ENCODE measurements at regions of chr16 and their contacts with region 1.

Region 1: GRCh38 chr16:30091474-30092372 is at the start of gene TBX6:
- DNase-seq: peak; percentile 16
- H3K4me3 ChIP-seq: peak within 1 kb of the TSS; percentile 56
- CTCF ChIP-seq: peak; percentile 84

Region 2: DNA sequence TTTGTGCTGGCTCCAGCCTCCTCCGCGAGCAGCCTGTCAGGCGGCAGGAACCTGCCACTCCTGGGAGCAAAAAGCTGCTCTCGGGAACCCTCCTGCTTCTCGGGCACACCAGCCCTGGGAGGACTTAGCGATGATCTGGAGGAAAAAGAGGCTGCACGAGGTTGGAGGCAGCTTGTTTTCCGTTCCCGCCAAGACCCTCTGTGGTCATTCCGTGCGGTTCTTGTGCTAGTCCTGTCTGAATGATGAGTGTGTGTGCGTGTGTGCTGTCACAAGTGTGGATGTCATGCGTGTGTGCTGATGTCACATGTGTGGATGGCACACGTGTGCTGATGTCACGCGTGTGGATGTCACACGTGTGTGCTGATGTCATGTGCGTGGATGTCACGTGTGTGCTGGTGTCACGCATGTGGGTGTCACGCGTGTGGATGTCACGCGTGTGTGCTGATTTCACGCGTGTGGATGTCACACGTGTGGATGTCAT is 835.2 kb before region 1 on chr16:
- CTCF ChIA-PET with region 1: no interaction called
- POLR2A ChIA-PET with region 1: no interaction called
- DNase-seq: no peak
- H3K4me3 ChIP-seq: no peak overlapping the region
- CTCF ChIP-seq: no peak

Region 3: DNA sequence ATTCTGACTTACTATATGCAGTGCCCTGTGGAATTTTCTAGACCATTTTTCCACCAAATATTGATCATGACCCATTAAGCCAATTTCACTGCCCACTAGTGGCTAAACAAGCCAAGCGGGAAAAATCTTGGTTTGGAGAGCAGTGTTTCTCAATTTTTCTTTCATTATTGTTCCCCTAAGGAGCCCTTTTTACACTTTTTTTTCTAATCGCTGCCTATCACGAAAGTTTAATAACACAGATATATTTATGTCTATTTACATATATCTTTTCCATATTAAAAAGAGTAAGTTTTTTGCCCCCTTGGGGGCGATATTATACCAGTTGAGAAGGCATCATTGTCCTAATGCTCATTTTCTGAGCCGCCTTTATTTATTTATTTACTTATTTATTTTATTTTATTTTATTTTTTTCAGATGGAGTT is 49.9 kb before region 1 on chr16:
- CTCF ChIA-PET with region 1: interaction called, 38 read pairs
- POLR2A ChIA-PET with region 1: no interaction called
- DNase-seq: no peak
- H3K4me3 ChIP-seq: no peak overlapping the region
- CTCF ChIP-seq: no peak

Region 4: GRCh38 chr16:30065143-30065850 is 26.4 kb before region 1 on chr16 and contains the start of gene ALDOA:
- CTCF ChIA-PET with region 1: interaction called, 12 read pairs
- POLR2A ChIA-PET with region 1: interaction called, 24 read pairs
- DNase-seq: peak; percentile 91
- H3K4me3 ChIP-seq: peak within 1 kb of the TSS; percentile 99
- CTCF ChIP-seq: no peak

Region 5: GRCh38 chr16:30075507-30076275 is 16.0 kb before region 1 on chr16 and contains the start of gene PPP4C:
- CTCF ChIA-PET with region 1: interaction called, 100 read pairs
- POLR2A ChIA-PET with region 1: interaction called, 10 read pairs
- DNase-seq: no peak
- H3K4me3 ChIP-seq: peak within 1 kb of the TSS; percentile 96
- CTCF ChIP-seq: peak; percentile 25

Region 6: GRCh38 chr16:30104494-30104968 is 12.8 kb after region 1 on chr16:
- CTCF ChIA-PET with region 1: interaction called, 33 read pairs
- POLR2A ChIA-PET with region 1: interaction called, 3 read pairs
- DNase-seq: no peak
- H3K4me3 ChIP-seq: no peak overlapping the region
- CTCF ChIP-seq: no peak

Region 7: DNA sequence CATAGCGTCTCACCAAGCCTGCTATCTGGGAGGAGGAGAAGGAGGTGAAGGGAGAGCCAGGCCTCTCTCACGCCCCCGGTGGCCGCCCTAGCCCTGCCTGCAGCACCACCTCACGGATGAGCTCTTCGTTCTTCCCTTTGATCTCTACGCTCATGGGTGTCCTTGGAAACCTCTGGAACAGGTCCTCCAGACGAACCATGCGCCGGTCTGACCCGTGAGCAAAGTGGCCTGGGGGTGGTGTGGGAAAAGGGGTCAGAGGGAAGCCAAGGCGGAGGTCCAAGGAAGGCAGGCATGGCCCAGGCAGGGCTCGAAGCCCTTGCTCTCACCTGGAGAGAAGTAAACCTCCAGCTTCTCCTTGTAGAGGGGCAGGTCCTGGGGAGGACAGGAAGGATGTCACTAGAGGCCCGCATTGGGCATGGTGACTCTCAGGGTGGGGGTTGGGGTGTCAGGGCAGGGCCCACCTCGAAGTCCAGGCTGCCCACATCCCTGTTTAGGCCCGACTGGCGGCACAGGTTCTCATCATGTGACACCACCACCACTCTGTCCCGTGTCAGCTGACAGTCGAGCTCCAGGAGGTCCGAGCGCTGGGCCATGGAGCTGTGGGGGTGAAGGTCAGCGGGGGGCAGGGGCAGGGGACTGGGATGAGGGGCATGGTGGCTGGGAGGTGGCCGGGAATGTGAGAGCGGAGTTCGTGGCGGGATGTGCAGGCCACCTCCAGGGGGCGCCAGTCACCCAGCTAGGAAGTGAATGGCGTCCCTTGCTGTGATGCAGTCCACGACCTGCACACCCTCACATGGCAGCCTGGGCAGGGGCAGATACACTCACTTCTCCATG is 20.7 kb after region 1 on chr16:
- CTCF ChIA-PET with region 1: interaction called, 18 read pairs
- POLR2A ChIA-PET with region 1: interaction called, 3 read pairs
- DNase-seq: no peak
- H3K4me3 ChIP-seq: no peak overlapping the region
- CTCF ChIP-seq: peak; percentile 75

Region 8: DNA sequence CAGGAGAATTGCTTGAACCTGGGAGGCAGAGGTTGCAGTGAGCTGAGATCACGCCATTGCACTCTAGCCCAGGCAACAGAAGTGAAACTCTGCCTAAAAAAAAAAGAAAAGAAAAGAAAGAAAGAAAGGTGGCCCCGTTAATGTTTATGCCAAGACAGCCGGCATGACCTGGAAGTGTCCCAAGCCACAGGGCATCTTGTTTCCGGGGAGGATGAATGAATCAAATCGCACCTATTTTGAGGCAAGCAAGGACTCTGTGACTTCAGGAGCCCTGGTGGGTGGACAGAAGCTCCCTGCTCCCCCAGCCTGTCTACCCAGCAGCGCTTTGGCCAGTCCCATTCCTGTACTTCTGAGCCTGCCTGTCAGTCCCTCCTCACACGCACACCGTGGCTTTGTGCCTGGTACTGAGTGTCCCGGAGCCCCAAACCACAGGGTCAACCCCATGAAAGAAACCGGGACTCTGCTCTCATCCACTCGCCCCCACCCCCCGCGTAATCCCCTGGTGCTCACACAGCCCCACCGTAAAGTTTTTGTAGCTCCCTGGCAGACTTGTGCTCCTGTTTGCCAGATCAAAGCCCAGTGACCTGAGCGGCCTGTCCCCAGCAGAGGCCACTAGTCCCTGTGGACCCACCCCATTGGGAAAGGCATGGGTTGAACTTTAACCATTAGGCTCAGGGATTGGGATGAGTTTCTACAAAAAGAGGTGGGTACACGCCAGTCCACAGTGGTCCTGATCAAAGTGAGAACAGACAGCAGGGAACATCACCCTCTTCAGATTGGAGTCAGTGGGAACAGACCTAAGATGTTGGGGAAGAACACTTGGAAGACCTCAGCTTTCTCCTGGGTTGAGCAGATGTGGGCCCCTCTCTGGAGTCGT is 244.1 kb after region 1 on chr16:
- CTCF ChIA-PET with region 1: no interaction called
- POLR2A ChIA-PET with region 1: no interaction called
- DNase-seq: no peak
- H3K4me3 ChIP-seq: peak overlapping the region; percentile 49
- CTCF ChIP-seq: no peak